ENCODE measurements at regions of chr2 and their contacts with region 1.

Region 1: DNA sequence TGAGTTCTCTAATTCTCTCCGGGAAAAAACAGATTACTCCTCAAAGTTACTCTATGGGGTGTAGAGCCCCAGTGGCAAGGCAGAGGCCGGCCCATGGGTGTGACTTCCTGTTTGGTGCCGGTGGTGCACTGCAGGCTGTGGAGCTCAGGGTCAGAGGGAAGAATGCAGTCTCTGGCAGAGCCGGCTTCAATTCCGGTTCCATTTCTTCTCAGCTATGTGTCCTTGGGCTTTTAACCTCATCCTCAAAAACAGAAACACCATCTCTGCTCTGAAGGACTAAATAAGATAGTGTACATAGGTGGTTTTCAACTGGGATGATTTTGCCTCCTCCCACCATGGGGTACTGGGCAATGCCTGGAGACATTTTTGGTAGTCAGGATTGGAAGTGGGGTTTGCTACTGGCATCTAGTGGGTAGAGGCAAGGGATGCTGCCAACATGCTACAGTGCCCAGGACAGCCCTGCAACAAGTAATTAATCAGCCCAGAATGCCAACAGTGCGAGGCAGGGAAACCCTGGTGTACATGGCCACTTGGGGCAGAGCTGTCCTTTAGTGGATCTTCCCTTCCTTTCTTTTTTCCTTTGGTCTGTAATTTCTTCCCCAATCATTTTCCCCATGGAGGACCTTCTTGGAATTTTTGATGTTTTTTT is 81.2 kb downstream of the INSIG2 start:
- DNase-seq: peak; percentile 36 to 50 (median 37)
- H3K4me3 ChIP-seq: peak overlapping the region in 1 of 3 experiments; percentile 50
- H3K4me3 Mint-ChIP-seq: peak overlapping the region in 1 of 2 donors; percentile 53
- H3K27ac ChIP-seq: peak overlapping the region; percentile 23 to 45
- H3K27ac Mint-ChIP-seq: peak overlapping the region in 3 of 7 donors; percentile 16 to 87 (median 47)
- H3K4me1 ChIP-seq: peaks cover 14 to 16% of the 10 kb centered on the region in 2 donors
- H3K4me1 Mint-ChIP-seq: no peaks in the 10 kb centered on the region
- H3K27me3 ChIP-seq: no peaks in the 10 kb centered on the region
- H3K27me3 Mint-ChIP-seq: peaks cover 0 to 7% (median 2%) of the 10 kb centered on the region in 3 donors
- CTCF ChIP-seq: no peak

Region 2: GRCh38 chr2:117856415-117857210 is 312.9 kb before region 1 on chr2:
- intact Hi-C with region 1: no loop called
- DNase-seq: no peak
- H3K4me3 ChIP-seq: no peak overlapping the region
- H3K4me3 Mint-ChIP-seq: no peak overlapping the region
- H3K27ac ChIP-seq: no peak overlapping the region
- H3K27ac Mint-ChIP-seq: no peak overlapping the region
- H3K4me1 ChIP-seq: no peaks in the 10 kb centered on the region
- H3K4me1 Mint-ChIP-seq: no peaks in the 10 kb centered on the region
- H3K27me3 ChIP-seq: peaks cover 4 to 29% of the 10 kb centered on the region in 2 donors
- H3K27me3 Mint-ChIP-seq: peaks cover 4 to 36% (median 20%) of the 10 kb centered on the region in 3 donors
- CTCF ChIP-seq: no peak

Region 3: GRCh38 chr2:118032169-118033013 is 137.1 kb before region 1 on chr2:
- intact Hi-C with region 1: no loop called
- DNase-seq: peak in 2 of 3 donors; percentile 46 to 73
- H3K4me3 ChIP-seq: no peak overlapping the region
- H3K4me3 Mint-ChIP-seq: no peak overlapping the region
- H3K27ac ChIP-seq: no peak overlapping the region
- H3K27ac Mint-ChIP-seq: peak overlapping the region in 1 of 7 donors; percentile 63
- H3K4me1 ChIP-seq: no peaks in the 10 kb centered on the region
- H3K4me1 Mint-ChIP-seq: no peaks in the 10 kb centered on the region
- H3K27me3 ChIP-seq: peaks cover 4 to 10% of the 10 kb centered on the region in 2 donors
- H3K27me3 Mint-ChIP-seq: peaks cover 13 to 20% (median 19%) of the 10 kb centered on the region in 3 donors
- CTCF ChIP-seq: peak; percentile 91

Region 4: GRCh38 chr2:118122594-118123281 is 46.7 kb before region 1 on chr2:
- intact Hi-C with region 1: loop called in 1 of 2 experiments (anchors 10 kb)
- DNase-seq: peak; percentile 12 to 25 (median 24)
- H3K4me3 ChIP-seq: peak overlapping the region in 1 of 3 experiments; percentile 19
- H3K4me3 Mint-ChIP-seq: no peak overlapping the region
- H3K27ac ChIP-seq: peak overlapping the region in 1 of 2 donors; percentile 73
- H3K27ac Mint-ChIP-seq: peak overlapping the region; percentile 40 to 87 (median 82)
- H3K4me1 ChIP-seq: peaks cover 50 to 51% of the 10 kb centered on the region in 2 donors
- H3K4me1 Mint-ChIP-seq: peaks cover 65% of the 10 kb centered on the region
- H3K27me3 ChIP-seq: no peaks in the 10 kb centered on the region
- H3K27me3 Mint-ChIP-seq: no peaks in the 10 kb centered on the region
- CTCF ChIP-seq: no peak